OCI-LY7 (cell line): ENCODE measurements at regions of chr18 and their contacts with region 1.

Region 1: GRCh38 chr18:4106407-4107033 is 348.6 kb downstream of the DLGAP1 start:
- DNase-seq: peak; percentile 70
- H3K4me3 ChIP-seq: no peak overlapping the region
- H3K27ac ChIP-seq: no peak overlapping the region
- H3K4me1 ChIP-seq: no peaks in the 10 kb centered on the region
- CTCF ChIP-seq: peak; percentile 97

Region 2: GRCh38 chr18:4040391-4041092 is 66.0 kb before region 1 on chr18:
- CTCF ChIA-PET with region 1: no interaction called
- POLR2A ChIA-PET with region 1: no interaction called
- intact Hi-C with region 1: loop called (anchors 10 kb)
- DNase-seq: no peak
- H3K4me3 ChIP-seq: no peak overlapping the region
- H3K27ac ChIP-seq: no peak overlapping the region
- H3K4me1 ChIP-seq: no peaks in the 10 kb centered on the region
- CTCF ChIP-seq: no peak

Region 3: GRCh38 chr18:4789506-4789905 is 683.0 kb after region 1 on chr18:
- CTCF ChIA-PET with region 1: no interaction called
- POLR2A ChIA-PET with region 1: no interaction called
- intact Hi-C with region 1: loop called (anchors 5 kb)
- DNase-seq: peak; percentile 69
- H3K4me3 ChIP-seq: no peak overlapping the region
- H3K27ac ChIP-seq: no peak overlapping the region
- H3K4me1 ChIP-seq: peaks cover 9% of the 10 kb centered on the region
- CTCF ChIP-seq: peak; percentile 37; the same call in 1 of the 2 replicates

Region 4: DNA sequence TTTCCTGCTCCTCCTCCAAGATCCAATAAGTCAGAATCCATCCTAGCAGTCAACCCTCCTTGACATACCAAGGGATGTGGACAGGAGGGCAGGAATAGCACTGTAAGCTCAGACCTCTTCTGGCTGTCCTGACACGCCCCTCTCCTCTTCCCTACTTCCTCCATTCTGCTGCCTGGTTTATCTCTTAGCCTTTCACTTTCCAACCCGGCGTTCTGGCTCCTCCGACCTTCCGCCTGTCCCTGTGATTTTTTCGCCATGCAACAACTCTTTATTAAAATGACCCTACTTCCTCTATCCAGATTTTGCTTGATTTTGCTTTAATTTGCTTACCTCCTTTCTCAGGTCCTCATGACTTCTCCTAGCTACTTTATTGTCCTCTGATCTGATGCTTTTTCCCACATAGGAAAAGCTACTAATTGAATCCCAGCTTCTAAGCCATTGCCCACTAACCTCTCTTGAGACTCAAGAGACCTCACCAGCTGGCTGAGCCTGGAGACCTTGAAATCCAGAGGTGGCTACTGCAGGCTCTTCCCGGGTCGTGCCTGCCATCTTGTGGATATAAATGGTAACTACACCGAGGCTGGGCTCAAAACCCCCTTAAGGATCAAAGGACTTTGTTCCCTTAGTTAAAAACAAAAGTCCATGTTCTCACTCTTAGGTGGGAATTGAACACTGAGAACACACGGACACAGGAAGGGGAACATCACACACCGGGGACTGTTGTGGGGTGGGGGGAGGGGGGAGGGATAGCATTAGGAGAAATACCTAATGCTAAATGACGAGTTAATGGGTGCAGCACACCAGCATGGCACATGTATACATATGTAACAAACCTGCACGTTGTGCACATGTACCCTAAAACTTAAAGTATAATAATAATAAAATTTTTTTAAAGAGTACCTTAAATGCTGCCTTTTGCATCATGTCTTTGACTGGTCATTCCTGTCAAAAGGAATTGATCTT is 951.1 kb after region 1 on chr18:
- CTCF ChIA-PET with region 1: interaction called, 3 read pairs
- POLR2A ChIA-PET with region 1: no interaction called
- intact Hi-C with region 1: loop called (anchors 1 kb)
- DNase-seq: peak; percentile 74
- H3K4me3 ChIP-seq: no peak overlapping the region
- H3K27ac ChIP-seq: no peak overlapping the region
- H3K4me1 ChIP-seq: peaks cover 17% of the 10 kb centered on the region
- CTCF ChIP-seq: peak; percentile 89